WTC11 (cell line): ENCODE measurements at regions of chr19 and their contacts with region 1.

Region 1: GRCh38 chr19:41998246-41999020 is 4.4 kb upstream of the ATP1A3 start:
- DNase-seq: peak; percentile 80
- ATAC-seq: peak; percentile 30
- H3K4me3 Mint-ChIP-seq: peak overlapping the region; percentile 72
- H3K27ac Mint-ChIP-seq: no peak overlapping the region
- H3K4me1 Mint-ChIP-seq: peaks cover 23% of the 10 kb centered on the region
- H3K27me3 Mint-ChIP-seq: peaks cover 69% of the 10 kb centered on the region
- CTCF ChIP-seq: peak; percentile 68

Region 2: DNA sequence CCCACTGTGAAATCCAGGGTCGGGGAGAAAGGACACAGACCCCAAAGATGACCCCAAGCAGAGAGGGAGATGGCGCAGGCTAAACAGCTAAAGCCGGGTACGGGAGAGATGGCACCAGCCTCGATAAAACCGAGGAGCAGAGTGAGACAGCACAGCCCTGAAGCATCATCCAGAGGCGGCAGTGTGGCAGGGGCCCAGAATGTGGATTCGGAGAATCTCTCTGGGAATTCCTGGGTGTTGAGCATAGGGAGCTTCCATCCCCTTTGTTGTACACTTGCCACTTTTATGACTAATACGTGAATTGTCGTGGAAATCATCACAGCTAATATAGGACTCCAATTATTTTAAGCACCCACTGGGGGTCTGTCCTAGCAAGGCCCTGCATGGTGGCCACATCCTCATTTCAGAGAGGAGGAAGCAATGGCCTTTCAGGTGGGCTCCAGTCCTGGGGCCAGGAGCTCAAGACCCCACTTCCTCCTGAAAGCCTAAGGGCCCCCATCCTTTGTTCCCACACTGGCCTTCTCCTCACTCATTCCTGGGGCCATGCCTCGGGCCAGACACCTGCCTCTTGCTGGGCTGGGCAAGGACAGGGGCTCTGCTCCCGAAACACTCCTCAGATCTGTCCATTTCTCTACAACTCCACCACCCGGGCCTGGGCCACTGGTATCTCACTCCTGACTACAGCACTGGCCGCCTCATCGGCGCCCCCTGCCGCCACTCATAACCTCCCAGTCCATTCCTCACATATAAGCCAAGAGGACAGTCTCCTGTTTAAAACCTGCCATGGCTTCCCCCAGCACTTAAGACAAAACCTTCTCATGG is 24.9 kb after region 1 on chr19:
- CTCF ChIA-PET with region 1: interaction called, 32 read pairs
- POLR2A ChIA-PET with region 1: no interaction called
- DNase-seq: peak; percentile 78
- ATAC-seq: peak; percentile 84
- H3K4me3 Mint-ChIP-seq: no peak overlapping the region
- H3K27ac Mint-ChIP-seq: peak overlapping the region; percentile 78; the same call in 1 of the 2 replicates
- H3K4me1 Mint-ChIP-seq: peaks cover 1% of the 10 kb centered on the region
- H3K27me3 Mint-ChIP-seq: no peaks in the 10 kb centered on the region
- CTCF ChIP-seq: peak; percentile 34; the same call in 1 of the 2 replicates